ENCODE measurements at regions of chr6 and their contacts with region 1.

Region 1: DNA sequence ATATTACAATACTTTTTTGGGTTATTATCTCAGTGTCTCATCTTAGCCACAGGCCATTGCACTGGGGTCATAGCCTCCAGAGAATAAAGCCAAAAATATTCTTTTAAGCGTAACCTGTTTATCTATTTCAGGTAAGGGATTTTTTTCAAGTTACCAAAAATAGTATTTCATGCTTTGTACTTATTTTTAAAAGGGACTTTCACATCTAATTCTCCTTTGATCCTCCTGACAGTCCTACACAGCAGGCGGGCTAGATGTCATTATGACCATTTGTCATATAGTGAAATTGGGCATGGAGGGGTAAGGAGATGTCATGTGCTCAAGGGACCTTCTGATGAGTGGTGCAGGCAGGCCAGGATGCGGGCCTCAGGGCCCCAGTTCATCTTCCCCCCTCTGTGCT is 68.9 kb downstream of the TBC1D7 start:
- DNase-seq: no peak
- H3K4me3 ChIP-seq: no peak overlapping the region
- CTCF ChIP-seq: no peak

Region 2: GRCh38 chr6:13006578-13007300 is 252.7 kb before region 1 on chr6:
- in situ Hi-C with region 1: loop called (anchors 10 kb)
- DNase-seq: no peak
- H3K4me3 ChIP-seq: no peak overlapping the region
- CTCF ChIP-seq: no peak

Region 3: DNA sequence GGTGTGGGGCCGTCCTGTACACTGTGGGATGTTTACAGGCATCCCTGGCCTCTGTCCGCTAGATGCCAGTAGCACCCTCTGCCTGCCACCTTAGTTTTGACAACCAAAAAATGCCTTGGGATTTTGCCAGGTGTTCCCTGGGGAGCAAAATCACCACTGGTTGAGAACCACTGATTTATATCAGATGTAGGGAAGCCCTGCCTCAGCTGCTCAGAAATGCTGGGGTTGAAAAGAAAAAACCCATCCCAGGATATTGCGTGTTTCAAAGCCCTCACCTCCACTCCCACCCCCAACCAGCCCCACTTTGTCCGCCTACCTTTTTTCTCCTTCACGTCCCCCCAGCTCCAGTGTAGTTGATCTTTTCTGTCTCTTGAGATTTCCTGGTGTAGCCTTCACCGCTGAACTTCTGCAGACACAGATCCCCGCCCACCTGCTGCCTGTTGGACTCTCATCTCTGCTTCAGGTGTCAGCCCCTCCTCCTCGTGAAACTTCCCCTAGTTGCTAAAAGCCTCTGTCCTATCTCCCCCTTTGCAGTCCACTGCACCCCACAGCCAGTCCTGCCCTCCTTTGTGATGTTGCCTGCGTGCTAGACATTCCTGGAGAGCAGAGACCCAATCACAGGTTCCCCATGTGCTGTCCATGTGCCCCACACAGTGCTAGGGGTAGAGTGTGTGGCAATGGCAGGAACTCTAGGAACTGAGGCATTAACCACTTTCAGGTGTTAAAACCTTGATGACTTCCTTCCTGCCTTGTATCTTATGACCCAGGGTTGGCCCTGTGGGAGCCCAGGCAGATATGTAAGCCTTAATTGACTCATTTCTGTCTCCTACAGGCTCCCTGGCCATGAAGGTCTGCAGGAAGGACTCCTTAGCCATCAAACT is 29.9 kb before region 1 on chr6:
- in situ Hi-C with region 1: no loop called
- DNase-seq: no peak
- H3K4me3 ChIP-seq: no peak overlapping the region
- CTCF ChIP-seq: no peak

Measured in astrocyte of the cerebellum (primary cell).